Upper lobe of right lung (tissue), 1 donor: ENCODE measurements at regions of chr2 and their contacts with region 1.

Region 1: GRCh38 chr2:98822301-98823164 is 91.6 kb upstream of the MGAT4A start:
- DNase-seq: peak; percentile 85
- ATAC-seq: peak; percentile 89
- H3K4me3 ChIP-seq: peak overlapping the region; percentile 52
- H3K27ac ChIP-seq: peak overlapping the region; percentile 75
- H3K4me1 ChIP-seq: peaks cover 13% of the 10 kb centered on the region
- H3K27me3 ChIP-seq: no peaks in the 10 kb centered on the region
- CTCF ChIP-seq: peak; percentile 28

Region 2: GRCh38 chr2:98253461-98254070 is 569.0 kb before region 1 on chr2:
- intact Hi-C with region 1: no loop called
- DNase-seq: no peak
- ATAC-seq: no peak
- H3K4me3 ChIP-seq: no peak overlapping the region
- H3K27ac ChIP-seq: no peak overlapping the region
- H3K4me1 ChIP-seq: no peaks in the 10 kb centered on the region
- H3K27me3 ChIP-seq: no peaks in the 10 kb centered on the region
- CTCF ChIP-seq: no peak

Region 3: GRCh38 chr2:98308068-98308467 is 514.5 kb before region 1 on chr2:
- intact Hi-C with region 1: no loop called
- DNase-seq: no peak
- ATAC-seq: no peak
- H3K4me3 ChIP-seq: no peak overlapping the region
- H3K27ac ChIP-seq: no peak overlapping the region
- H3K4me1 ChIP-seq: peaks cover 7% of the 10 kb centered on the region
- H3K27me3 ChIP-seq: no peaks in the 10 kb centered on the region
- CTCF ChIP-seq: no peak

Region 4: GRCh38 chr2:98727369-98728087 is 95.0 kb before region 1 on chr2:
- intact Hi-C with region 1: loop called (anchors 10 kb)
- DNase-seq: no peak
- ATAC-seq: no peak
- H3K4me3 ChIP-seq: peak overlapping the region; percentile 82
- H3K27ac ChIP-seq: peak overlapping the region; percentile 83
- H3K4me1 ChIP-seq: peaks cover 34% of the 10 kb centered on the region
- H3K27me3 ChIP-seq: no peaks in the 10 kb centered on the region
- CTCF ChIP-seq: no peak

Region 5: GRCh38 chr2:98869244-98869939 is 46.9 kb after region 1 on chr2:
- intact Hi-C with region 1: no loop called
- DNase-seq: peak; percentile 92
- ATAC-seq: peak; percentile 92
- H3K4me3 ChIP-seq: peak overlapping the region; percentile 32
- H3K27ac ChIP-seq: peak overlapping the region; percentile 88
- H3K4me1 ChIP-seq: peaks cover 5% of the 10 kb centered on the region
- H3K27me3 ChIP-seq: no peaks in the 10 kb centered on the region
- CTCF ChIP-seq: peak; percentile 7